Dorsolateral prefrontal cortex (tissue), 120 donors: ENCODE measurements at regions of chr15 and their contacts with region 1.

Region 1: DNA sequence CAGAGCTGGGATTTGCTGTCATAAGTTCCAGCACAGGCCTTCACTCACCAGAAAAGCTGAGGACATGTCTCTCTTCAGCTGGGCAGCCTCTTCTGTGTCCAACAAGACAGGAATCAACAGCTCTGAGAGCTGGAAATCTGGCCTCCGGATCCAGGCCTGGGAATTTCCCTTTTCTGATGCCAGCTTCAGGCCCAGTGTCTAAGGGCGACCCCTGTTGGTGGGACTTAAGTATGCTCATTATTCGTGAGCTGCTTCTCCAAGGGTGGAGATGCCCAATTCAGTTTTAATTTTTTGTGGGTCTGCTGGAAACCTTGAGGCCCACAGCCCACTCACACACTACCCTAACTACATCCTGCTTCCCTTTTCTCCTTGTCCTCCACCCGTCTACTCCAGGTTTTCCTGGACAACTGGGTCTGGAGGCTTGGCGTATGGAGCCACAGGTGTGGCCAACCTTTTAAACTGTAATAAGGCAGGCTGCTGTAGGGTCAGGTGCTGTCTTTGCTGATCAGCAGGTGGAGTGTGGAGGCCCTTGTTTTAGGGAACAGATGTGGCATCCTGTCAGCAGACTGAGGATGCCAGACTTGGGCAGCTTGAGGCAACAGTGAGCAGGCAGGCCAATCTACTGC is 2.6 kb upstream of the CEMIP start:
- DNase-seq: peak; percentile 33 to 81 (median 70)
- H3K4me3 ChIP-seq: no peak overlapping the region
- H3K27ac ChIP-seq: peak overlapping the region in 13 of 59 donors; percentile 8 to 75 (median 31)
- H3K27me3 ChIP-seq: peaks cover 0 to 22% (median 0%) of the 10 kb centered on the region in 45 donors
- CTCF ChIP-seq: peak; percentile 57 to 96 (median 85)

Region 2: DNA sequence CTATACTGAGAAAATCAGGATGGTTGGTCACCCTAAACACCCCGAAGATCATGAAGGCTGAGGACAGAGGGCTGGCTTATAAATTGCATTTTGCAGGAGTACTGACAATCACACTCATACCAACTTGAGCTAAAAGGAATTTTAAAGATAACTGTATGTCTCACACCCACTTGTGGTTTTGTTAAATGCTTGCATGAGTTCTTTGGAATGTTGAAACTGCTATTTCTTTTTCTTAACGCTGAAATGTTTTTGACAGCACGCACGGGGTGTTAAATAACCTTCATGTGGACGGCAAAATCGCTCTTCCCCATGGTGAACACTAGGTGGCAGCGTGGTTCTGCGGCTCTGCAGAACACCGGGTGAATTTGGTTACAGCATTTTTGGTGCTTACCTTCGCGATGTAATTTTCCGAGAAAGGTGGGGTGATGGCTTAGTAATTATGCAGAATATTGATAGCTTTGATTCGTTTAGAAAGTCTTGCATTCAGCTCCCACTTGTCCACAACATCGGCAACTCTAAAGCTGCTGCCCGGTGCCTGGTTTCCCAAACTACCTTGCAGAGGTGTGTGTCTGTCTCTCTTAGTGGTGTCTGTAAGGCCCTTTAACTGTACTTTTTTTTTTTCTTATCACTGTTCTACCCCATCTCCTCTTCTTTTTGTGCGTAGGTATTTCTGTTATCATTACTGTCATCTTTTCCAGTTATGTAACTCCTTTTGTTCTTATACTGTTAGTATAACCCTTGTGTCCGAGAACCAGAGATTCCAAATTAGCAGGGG is 320.7 kb before region 1 on chr15:
- intact Hi-C with region 1: loop called (anchors 1 to 2 kb)
- DNase-seq: peak in 3 of 10 donors; percentile 65 to 73 (median 71)
- H3K4me3 ChIP-seq: peak overlapping the region in 14 of 59 donors; percentile 0 to 34 (median 18)
- H3K27ac ChIP-seq: peak overlapping the region in 51 of 59 donors; percentile 7 to 84 (median 51)
- H3K27me3 ChIP-seq: no peaks in the 10 kb centered on the region
- CTCF ChIP-seq: peak; percentile 82 to 99 (median 94)

Region 3: GRCh38 chr15:80567721-80568157 is 208.8 kb before region 1 on chr15:
- intact Hi-C with region 1: loop called (anchors 5 kb)
- DNase-seq: peak in 6 of 10 donors; percentile 34 to 79 (median 62)
- H3K4me3 ChIP-seq: no peak overlapping the region
- H3K27ac ChIP-seq: peak overlapping the region in 35 of 59 donors; percentile 2 to 77 (median 42)
- H3K27me3 ChIP-seq: no peaks in the 10 kb centered on the region
- CTCF ChIP-seq: peak; percentile 27 to 83 (median 73)

Region 4: GRCh38 chr15:80615761-80616391 is 160.7 kb before region 1 on chr15:
- intact Hi-C with region 1: loop called in 1 of 2 experiments (anchors 5 kb)
- DNase-seq: peak in 1 of 10 donors; percentile 74
- H3K4me3 ChIP-seq: no peak overlapping the region
- H3K27ac ChIP-seq: no peak overlapping the region
- H3K27me3 ChIP-seq: no peaks in the 10 kb centered on the region
- CTCF ChIP-seq: no peak

Region 5: GRCh38 chr15:80695104-80695910 is 81.2 kb before region 1 on chr15 and contains the start of gene ABHD17C:
- intact Hi-C with region 1: loop called in 1 of 2 experiments (anchors 5 kb)
- DNase-seq: peak in 9 of 10 donors; percentile 26 to 78 (median 40)
- H3K4me3 ChIP-seq: peak within 1 kb of the TSS; percentile 59 to 91 (median 79)
- H3K27ac ChIP-seq: peak within 1 kb of the TSS in 52 of 59 donors; percentile 22 to 89 (median 74)
- H3K27me3 ChIP-seq: no peaks in the 10 kb centered on the region
- CTCF ChIP-seq: no peak
- total RNA-seq, gene ABHD17C: 14.5 to 33.2 (median 21.2) TPM

Region 6: DNA sequence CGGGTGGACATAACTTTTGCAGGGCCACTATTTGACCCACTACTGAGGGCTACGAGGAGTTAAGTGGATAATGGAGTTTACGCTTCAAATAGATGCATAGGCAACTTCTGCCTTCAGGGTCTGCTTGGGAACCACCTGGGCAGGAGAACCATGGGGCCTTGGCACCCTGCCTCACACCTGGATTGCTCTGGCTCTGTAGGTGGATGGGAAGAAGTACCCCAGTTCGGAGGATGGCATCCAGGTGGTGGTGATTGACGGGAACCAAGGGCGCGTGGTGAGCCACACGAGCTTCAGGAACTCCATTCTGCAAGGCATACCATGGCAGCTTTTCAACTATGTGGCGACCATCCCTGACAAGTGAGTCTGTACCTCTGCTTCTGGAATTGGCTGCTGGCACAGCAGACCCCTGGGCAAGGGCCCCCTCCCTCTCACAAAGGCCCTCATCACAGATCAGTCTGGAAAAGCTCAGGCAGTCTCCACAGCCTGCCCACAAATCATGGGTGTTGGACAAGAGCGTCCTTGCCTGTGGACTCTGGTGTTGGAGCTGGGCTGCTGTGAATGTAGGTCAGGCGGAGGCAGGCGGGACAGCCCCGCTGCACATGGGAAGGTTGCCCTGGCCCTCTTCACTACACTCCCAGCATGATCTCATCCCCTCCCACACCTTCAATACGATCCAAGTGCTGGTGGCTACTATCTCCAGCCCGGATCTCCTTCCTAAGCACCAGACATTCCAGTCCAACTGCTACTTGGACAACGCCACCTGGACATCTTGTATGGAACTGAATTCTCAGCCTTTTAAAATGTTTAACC is 166.4 kb after region 1 on chr15:
- intact Hi-C with region 1: loop called in 1 of 2 experiments (anchors 10 kb)
- DNase-seq: peak in 7 of 10 donors; percentile 18 to 72 (median 62)
- H3K4me3 ChIP-seq: no peak overlapping the region
- H3K27ac ChIP-seq: peak overlapping the region in 10 of 59 donors; percentile 9 to 62 (median 36)
- H3K27me3 ChIP-seq: no peaks in the 10 kb centered on the region
- CTCF ChIP-seq: no peak

Region 7: DNA sequence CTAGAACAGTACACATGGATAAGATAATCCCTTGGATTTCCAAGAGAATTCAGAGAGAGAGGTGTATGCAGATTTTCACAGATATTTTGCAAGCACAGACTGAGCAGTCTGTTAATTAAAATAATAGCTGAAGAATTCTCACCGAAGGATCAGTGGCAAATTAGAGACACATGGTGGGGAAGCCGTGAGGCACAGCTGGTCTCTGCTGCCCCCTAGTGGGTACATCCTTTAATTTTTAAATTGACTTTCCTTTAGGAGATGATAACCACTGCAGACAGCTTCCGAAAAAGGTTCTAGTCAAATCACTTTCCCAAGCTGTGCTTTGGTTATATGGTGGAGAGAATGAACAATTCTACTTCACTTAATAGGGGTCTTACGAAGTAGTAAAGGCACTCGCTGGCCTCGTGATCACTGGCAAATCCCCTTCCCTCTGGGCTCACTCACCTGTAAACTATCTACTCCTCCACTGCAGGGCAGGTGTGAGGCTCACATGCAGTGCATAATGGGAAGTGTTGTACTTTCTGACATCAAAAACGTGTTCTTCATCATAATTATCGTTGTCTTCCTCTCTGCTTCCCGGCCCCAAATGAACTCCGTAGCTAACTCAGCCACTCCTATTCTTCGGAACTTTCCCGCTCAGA is 193.6 kb after region 1 on chr15:
- intact Hi-C with region 1: loop called (anchors 5 kb)
- DNase-seq: peak in 6 of 10 donors; percentile 51 to 80 (median 67)
- H3K4me3 ChIP-seq: no peak overlapping the region
- H3K27ac ChIP-seq: no peak overlapping the region
- H3K27me3 ChIP-seq: no peaks in the 10 kb centered on the region
- CTCF ChIP-seq: peak; percentile 80 to 98 (median 92)